Activated CD8-positive, alpha-beta memory T cell treated with anti-CD3 and anti-CD28 coated beads, Interleukin-2, amount 10 ng/mL, durations not matched to agents 7 days and 5 days (primary cell): ENCODE measurements at regions of chr1 and their contacts with region 1.

Region 1: GRCh38 chr1:26035959-26036755 is 9.8 kb downstream of the SLC30A2 start:
- DNase-seq: peak; percentile 79
- ATAC-seq: peak; percentile 70
- H3K4me3 Mint-ChIP-seq: peak overlapping the region; percentile 89
- H3K27ac Mint-ChIP-seq: no peak overlapping the region
- H3K4me1 Mint-ChIP-seq: peaks cover 8% of the 10 kb centered on the region
- H3K27me3 Mint-ChIP-seq: peaks cover 15% of the 10 kb centered on the region

Region 2: DNA sequence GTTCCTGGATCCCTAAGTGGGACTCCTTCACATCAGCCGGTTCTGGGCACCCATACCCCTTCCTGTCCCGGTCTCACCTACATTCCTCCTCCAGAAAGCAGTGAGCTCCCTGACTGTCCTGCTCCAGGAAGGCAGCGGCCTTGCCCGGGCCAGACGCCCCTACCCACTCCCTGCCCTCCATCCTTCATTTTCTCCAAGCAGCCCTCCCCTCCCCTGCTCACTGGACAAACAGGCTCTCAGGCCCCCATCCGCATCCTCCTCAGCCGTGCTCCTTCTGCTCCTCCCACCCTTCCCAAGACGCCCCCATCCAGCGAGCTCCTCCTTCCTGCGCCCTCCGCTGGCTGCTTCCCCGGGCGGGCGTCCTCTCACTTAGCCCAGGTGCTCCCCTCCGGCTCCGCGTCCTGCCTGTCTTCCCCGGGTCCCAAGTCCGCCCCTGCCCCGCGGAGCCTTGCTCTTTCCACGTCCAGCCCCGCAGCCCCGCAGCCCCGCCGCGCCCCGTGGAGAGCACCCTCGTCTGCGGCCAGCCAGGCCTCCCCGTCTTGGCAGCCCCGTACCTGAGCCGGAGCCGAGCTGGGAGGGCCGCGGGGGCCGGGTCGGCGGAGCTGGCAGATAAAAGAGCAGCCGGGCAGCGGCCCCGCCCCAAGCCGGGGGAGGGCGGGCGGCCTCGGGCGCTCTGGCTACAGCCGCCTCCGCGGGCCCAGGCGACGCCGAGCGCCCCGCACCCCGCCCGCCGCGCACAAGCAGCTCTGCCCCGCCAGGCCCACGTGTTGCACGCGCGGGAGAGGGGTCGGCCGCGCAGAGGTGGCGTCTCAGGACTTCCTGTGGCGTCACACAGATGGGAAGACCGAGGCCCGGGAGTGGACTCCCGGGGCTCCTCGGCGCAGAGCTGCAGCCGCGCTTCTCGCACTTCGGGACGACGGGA is 161.0 kb before region 1 on chr1 and contains the start of gene PAQR7:
- CTCF ChIA-PET with region 1: interaction called, 10 read pairs
- DNase-seq: peak; percentile 72
- ATAC-seq: peak; percentile 86
- H3K4me3 Mint-ChIP-seq: peak within 1 kb of the TSS; percentile 79
- H3K27ac Mint-ChIP-seq: peak within 1 kb of the TSS; percentile 15
- H3K4me1 Mint-ChIP-seq: peaks cover 10% of the 10 kb centered on the region
- H3K27me3 Mint-ChIP-seq: peaks cover 20% of the 10 kb centered on the region
- total RNA-seq, gene PAQR7: 2.2 to 5.0 TPM